Right ventricle myocardium inferior (tissue), 1 donor: ENCODE measurements at regions of chr15 and their contacts with region 1.

Region 1: DNA sequence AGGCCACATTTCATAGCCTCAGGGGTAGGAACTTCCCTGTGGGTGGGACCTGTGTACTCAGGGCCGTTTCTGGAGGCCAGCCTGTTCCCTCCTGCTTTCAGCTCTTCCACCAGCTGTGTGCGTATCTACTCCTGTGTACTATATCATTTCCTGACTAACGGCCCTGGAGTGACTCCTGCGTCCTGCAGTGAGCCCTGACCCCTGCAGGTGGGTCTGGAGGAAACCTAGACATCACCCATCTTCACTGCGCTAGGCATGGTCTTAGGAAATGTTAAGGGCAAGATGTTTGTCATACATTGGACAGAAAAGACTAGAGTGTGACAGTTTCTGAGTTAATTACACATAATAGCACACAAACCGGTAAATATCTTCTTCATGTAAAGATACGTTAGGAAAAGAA is 297.3 kb downstream of the GABRB3 start:
- DNase-seq: no peak
- ATAC-seq: no peak

Region 2: GRCh38 chr15:26376243-26376642 is 99.3 kb before region 1 on chr15:
- intact Hi-C with region 1: no loop called
- DNase-seq: no peak
- ATAC-seq: no peak

Region 3: GRCh38 chr15:26421065-26421464 is 54.5 kb before region 1 on chr15:
- intact Hi-C with region 1: loop called (anchors 10 kb)
- DNase-seq: no peak
- ATAC-seq: no peak